Activated naive CD4-positive, alpha-beta T cell treated with anti-CD3 and anti-CD28 coated beads, Interleukin-2, amount 10 ng/mL, durations not matched to agents 7 days and 5 days (primary cell): ENCODE measurements at regions of chr11 and their contacts with region 1.

Region 1: GRCh38 chr11:64304316-64305072 is 830 bp upstream of the ESRRA start:
- DNase-seq: peak; percentile 97
- H3K4me3 Mint-ChIP-seq: peak overlapping the region; percentile 78
- H3K27ac Mint-ChIP-seq: peak overlapping the region; percentile 98
- H3K4me1 Mint-ChIP-seq: peaks cover 50% of the 10 kb centered on the region
- H3K27me3 Mint-ChIP-seq: peaks cover 30% of the 10 kb centered on the region

Region 2: GRCh38 chr11:64204464-64204989 is 100.0 kb before region 1 on chr11:
- CTCF ChIA-PET with region 1: interaction called, 131 read pairs
- DNase-seq: peak; percentile 90
- H3K4me3 Mint-ChIP-seq: peak overlapping the region; percentile 71
- H3K27ac Mint-ChIP-seq: peak overlapping the region; percentile 86
- H3K4me1 Mint-ChIP-seq: peaks cover 48% of the 10 kb centered on the region
- H3K27me3 Mint-ChIP-seq: no peaks in the 10 kb centered on the region

Region 3: DNA sequence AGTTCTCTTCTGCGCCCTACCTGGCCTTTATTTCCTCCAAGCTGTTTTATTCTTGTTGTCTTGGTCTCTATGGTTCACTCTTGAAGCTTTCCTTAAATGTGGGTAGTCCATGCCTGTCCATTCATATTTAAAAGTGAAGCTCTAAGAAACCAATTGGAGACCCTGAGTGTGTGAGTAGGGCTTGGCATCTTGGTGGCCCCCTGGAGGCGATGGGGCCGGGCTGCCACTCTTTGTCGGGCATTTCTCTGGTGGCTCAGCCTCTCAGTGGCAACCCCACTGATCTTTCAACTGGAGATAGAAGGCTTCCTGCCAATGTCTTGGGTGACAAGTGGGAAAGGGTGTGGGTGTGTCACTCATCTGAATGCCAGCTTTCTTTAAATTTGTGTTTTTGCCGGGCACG is 87.6 kb before region 1 on chr11:
- CTCF ChIA-PET with region 1: no interaction called
- DNase-seq: no peak
- H3K4me3 Mint-ChIP-seq: no peak overlapping the region
- H3K27ac Mint-ChIP-seq: no peak overlapping the region
- H3K4me1 Mint-ChIP-seq: peaks cover 13% of the 10 kb centered on the region
- H3K27me3 Mint-ChIP-seq: no peaks in the 10 kb centered on the region

Region 4: GRCh38 chr11:64269380-64270234 is 34.9 kb before region 1 on chr11:
- CTCF ChIA-PET with region 1: interaction called, 25 read pairs
- DNase-seq: peak; percentile 98
- H3K4me3 Mint-ChIP-seq: peak overlapping the region; percentile 92
- H3K27ac Mint-ChIP-seq: peak overlapping the region; percentile 97
- H3K4me1 Mint-ChIP-seq: peaks cover 26% of the 10 kb centered on the region
- H3K27me3 Mint-ChIP-seq: no peaks in the 10 kb centered on the region

Region 5: GRCh38 chr11:64291752-64292459 is 12.6 kb before region 1 on chr11:
- CTCF ChIA-PET with region 1: interaction called, 50 read pairs
- DNase-seq: peak; percentile 37
- H3K4me3 Mint-ChIP-seq: no peak overlapping the region
- H3K27ac Mint-ChIP-seq: no peak overlapping the region
- H3K4me1 Mint-ChIP-seq: peaks cover 13% of the 10 kb centered on the region
- H3K27me3 Mint-ChIP-seq: peaks cover 84% of the 10 kb centered on the region

Region 6: GRCh38 chr11:64331557-64332371 is 27.3 kb after region 1 on chr11:
- CTCF ChIA-PET with region 1: interaction called, 22 read pairs
- DNase-seq: peak; percentile 81
- H3K4me3 Mint-ChIP-seq: no peak overlapping the region
- H3K27ac Mint-ChIP-seq: peak overlapping the region; percentile 8
- H3K4me1 Mint-ChIP-seq: peaks cover 13% of the 10 kb centered on the region
- H3K27me3 Mint-ChIP-seq: peaks cover 7% of the 10 kb centered on the region

Region 7: GRCh38 chr11:64448599-64449556 is 144.4 kb after region 1 on chr11:
- CTCF ChIA-PET with region 1: no interaction called
- DNase-seq: peak; percentile 81
- H3K4me3 Mint-ChIP-seq: peak overlapping the region; percentile 62
- H3K27ac Mint-ChIP-seq: no peak overlapping the region
- H3K4me1 Mint-ChIP-seq: peaks cover 19% of the 10 kb centered on the region
- H3K27me3 Mint-ChIP-seq: peaks cover 77% of the 10 kb centered on the region